Activated T-helper 1 cell treated with anti-CD3 and anti-CD28 coated beads, Interleukin-12 subunit alpha, Interleukin-12 subunit beta, Interleukin-2, Interleukin-4 antibody, amounts not matched to agents 30 ng/mL and 10 ng/mL and 1 ng/mL, durations not matched to agents 14 hours and 24 hours and 36 hours (primary cell): ENCODE measurements at regions of chr14 and their contacts with region 1.

Region 1: DNA sequence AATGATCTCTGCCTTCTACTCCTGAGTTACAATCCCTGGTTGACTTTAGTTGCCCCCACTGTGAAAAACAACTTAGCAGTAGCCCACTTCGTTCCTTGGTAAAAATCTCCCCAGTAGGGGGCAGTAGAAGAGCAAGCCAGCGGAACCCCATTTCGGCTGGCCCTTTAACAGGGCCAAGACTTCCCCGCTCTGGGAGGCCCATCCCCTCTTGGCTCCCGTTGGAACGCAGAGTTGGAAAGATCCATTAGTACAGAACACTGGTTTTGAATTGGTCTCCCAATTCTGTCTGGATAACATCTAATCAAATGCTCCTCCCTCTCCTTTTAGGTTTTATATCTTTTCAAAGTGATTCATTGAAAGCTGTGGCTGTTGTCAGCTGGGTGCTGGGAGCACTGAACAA is 1133.3 kb downstream of the BCL11B start:
- DNase-seq: peak; percentile 69
- H3K4me3 Mint-ChIP-seq: peak overlapping the region; percentile 64
- H3K27ac Mint-ChIP-seq: peak overlapping the region; percentile 87
- H3K4me1 Mint-ChIP-seq: peaks cover 87% of the 10 kb centered on the region
- H3K27me3 Mint-ChIP-seq: no peaks in the 10 kb centered on the region

Region 2: GRCh38 chr14:97978341-97978740 is 160.3 kb before region 1 on chr14:
- intact Hi-C with region 1: loop called (anchors 1 kb)
- DNase-seq: peak; percentile 70
- H3K4me3 Mint-ChIP-seq: peak overlapping the region; percentile 84
- H3K27ac Mint-ChIP-seq: peak overlapping the region; percentile 87
- H3K4me1 Mint-ChIP-seq: peaks cover 62% of the 10 kb centered on the region
- H3K27me3 Mint-ChIP-seq: no peaks in the 10 kb centered on the region

Region 3: DNA sequence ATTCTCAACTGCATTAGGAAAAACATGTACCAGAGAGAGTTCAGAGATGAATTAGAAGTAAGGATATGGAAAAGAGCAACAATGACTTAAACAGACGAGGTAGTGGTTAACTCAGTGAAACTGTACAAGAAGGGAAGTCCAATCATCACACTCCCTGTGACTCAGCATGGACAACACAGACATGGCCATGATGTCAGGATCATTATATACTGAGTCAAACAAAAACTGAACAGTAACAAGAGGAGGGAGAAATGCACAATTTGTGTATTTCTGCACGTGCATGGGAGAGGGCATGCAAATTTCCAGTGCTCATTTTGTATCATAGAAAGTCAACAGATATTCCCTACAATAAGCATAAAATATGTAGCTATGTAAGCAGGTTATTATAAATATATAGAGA is 95.5 kb after region 1 on chr14:
- intact Hi-C with region 1: loop called (anchors 2 kb)
- DNase-seq: no peak
- H3K4me3 Mint-ChIP-seq: no peak overlapping the region
- H3K27ac Mint-ChIP-seq: no peak overlapping the region
- H3K4me1 Mint-ChIP-seq: peaks cover 34% of the 10 kb centered on the region
- H3K27me3 Mint-ChIP-seq: no peaks in the 10 kb centered on the region

Region 4: DNA sequence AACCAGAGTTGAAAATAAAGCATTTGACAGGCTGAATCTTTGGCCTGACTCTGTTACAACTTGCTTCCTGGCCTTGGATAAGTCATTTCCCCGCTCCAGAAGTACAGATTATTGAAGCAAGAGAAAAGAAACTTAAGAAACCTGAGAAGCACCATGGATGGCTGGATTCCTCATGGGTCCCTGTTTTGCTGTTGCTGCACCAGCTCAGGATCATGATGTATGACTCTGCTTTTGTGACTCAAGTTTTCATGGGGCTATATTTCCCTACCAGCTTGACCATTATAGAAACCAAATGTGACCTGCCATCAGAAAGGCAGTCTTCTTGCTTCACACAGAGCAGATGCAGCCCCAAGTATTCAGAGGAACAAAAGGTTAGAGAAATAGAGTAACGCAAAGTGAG is 211.5 kb after region 1 on chr14:
- intact Hi-C with region 1: loop called (anchors 5 kb)
- DNase-seq: no peak
- H3K4me3 Mint-ChIP-seq: no peak overlapping the region
- H3K27ac Mint-ChIP-seq: no peak overlapping the region
- H3K4me1 Mint-ChIP-seq: no peaks in the 10 kb centered on the region
- H3K27me3 Mint-ChIP-seq: no peaks in the 10 kb centered on the region

Region 5: DNA sequence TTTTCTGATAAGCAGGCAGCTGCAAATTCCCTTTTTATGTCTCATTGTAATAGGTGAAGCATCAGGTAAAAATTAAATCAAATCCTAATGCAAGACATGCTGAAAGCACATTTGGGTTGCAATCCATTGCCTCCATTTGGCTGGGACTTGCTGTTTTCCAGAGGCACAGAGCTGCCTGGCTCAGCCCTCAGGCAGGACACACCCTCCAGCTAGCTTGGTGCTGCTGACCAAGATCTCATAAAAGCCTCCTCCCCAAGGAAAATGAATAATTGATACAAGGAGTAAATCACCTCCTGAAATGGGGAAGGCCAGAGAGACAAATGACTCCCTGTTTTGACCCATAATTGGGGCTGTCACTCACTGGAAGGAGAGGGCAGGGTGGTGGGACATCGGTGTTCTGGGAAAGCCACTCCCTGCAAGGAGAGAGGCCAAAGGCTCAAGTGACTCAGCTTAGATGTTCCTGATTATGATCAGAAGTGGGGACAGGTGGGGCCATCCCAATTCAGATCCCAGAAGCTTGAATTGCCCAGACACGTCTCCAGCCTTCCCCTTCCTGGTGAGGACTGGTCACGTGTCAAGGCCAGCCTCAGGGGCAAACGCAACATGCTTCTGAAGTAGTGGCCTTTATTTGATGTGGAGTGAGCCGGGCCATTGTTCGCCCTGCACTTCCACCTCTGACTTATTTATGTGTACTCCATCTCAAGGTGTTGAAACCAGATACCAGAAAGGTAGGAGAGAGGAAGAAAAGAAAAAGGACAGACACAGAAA is 359.5 kb after region 1 on chr14:
- intact Hi-C with region 1: loop called (anchors 5 kb)
- DNase-seq: no peak
- H3K4me3 Mint-ChIP-seq: no peak overlapping the region
- H3K27ac Mint-ChIP-seq: no peak overlapping the region
- H3K4me1 Mint-ChIP-seq: peaks cover 6% of the 10 kb centered on the region
- H3K27me3 Mint-ChIP-seq: no peaks in the 10 kb centered on the region

Region 6: GRCh38 chr14:98692857-98693256 is 554.2 kb after region 1 on chr14:
- intact Hi-C with region 1: loop called (anchors 10 kb)
- DNase-seq: no peak
- H3K4me3 Mint-ChIP-seq: no peak overlapping the region
- H3K27ac Mint-ChIP-seq: no peak overlapping the region
- H3K4me1 Mint-ChIP-seq: no peaks in the 10 kb centered on the region
- H3K27me3 Mint-ChIP-seq: peaks cover 1% of the 10 kb centered on the region

Region 7: GRCh38 chr14:99415496-99416281 is 1277.0 kb after region 1 on chr14:
- intact Hi-C with region 1: loop called (anchors 2 kb)
- DNase-seq: peak; percentile 55
- H3K4me3 Mint-ChIP-seq: no peak overlapping the region
- H3K27ac Mint-ChIP-seq: no peak overlapping the region
- H3K4me1 Mint-ChIP-seq: peaks cover 26% of the 10 kb centered on the region
- H3K27me3 Mint-ChIP-seq: no peaks in the 10 kb centered on the region